GM12878 (cell line): ENCODE measurements at regions of chr3 and their contacts with region 1.

Region 1: DNA sequence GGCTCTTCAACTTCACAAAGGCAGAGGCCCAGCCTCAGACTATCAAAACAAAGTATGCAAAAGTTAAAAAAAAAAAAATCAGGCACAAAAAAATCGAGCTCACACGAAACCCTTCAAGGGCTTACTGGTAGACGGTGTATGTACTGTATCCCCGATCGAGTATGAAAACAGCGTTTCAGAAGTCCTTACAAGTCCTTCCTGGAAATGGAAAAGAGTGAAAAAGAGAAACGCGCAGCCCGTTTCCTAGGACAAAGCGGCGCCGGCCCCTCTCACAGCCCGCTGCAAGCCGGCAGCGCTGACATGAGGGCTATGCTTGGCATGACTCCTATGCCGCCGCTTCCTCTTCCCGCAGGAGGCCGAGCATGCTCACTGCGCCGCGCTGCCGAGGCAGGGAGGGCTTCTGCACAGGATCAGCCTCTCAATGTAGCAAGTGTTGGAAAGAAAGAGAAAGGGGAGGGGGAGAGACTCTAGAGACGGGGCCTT is at the start of gene VGLL4:
- DNase-seq: no peak
- ATAC-seq: peak; percentile 85
- H3K4me3 ChIP-seq: peak within 1 kb of the TSS; percentile 86
- H3K27ac ChIP-seq: peak within 1 kb of the TSS; percentile 98
- H3K4me1 ChIP-seq: peaks cover 6% of the 10 kb centered on the region
- H3K27me3 ChIP-seq: no peaks in the 10 kb centered on the region
- CTCF ChIP-seq: peak in 2 of 3 experiments; percentile 4 to 25; a peak in 2 of 6 replicates
- EP300 ChIP-seq: no peak
- POLR2A ChIP-seq: peak; percentile 75
- RAD21 ChIP-seq: peak; percentile 36; the same call in 1 of the 2 replicates
- polyA plus RNA-seq, gene VGLL4: 0.44 to 1.5 TPM

Region 2: DNA sequence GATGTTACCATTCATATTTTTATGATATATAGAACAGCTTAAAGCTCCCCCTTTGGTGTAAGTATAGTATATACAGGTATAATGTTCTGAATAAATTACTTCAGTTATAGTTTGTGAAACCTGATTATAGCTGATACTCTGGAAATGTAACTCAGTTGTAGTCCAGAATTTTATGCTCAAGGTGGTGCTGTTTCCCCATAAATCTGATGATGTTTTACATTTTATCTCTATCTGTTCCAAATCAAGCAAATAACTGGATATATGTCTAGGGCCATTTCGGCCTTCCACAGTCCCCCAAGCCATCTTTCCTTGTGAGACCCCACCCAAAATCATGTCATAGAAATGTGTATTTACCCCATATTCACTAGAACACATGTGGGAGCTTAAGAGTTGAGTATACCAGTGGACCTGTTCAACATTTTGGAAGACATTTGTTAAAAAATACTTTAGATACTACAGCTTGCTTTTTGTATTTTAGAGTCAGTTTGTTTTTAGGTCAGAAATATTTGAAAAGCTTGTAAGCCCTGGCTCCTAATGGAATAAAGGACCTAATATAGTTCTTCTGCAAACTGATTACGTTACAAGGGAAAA is 264.3 kb before region 1 on chr3:
- CTCF ChIA-PET with region 1: interaction called, 19 read pairs
- POLR2A ChIA-PET with region 1: interaction called, 4 read pairs
- RAD21 ChIA-PET with region 1: interaction called, 53 read pairs
- SMC1A ChIA-PET with region 1: interaction called, 55 read pairs
- in situ Hi-C with region 1: no loop called
- intact Hi-C with region 1: no loop called
- DNase-seq: peak; percentile 13
- ATAC-seq: peak; percentile 49; the same call in 2 of the 3 replicates
- H3K4me3 ChIP-seq: no peak overlapping the region
- H3K27ac ChIP-seq: no peak overlapping the region
- H3K4me1 ChIP-seq: no peaks in the 10 kb centered on the region
- H3K27me3 ChIP-seq: no peaks in the 10 kb centered on the region
- CTCF ChIP-seq: peak; percentile 22 to 60 (median 44); a peak in 4 of 6 replicates
- EP300 ChIP-seq: no peak
- POLR2A ChIP-seq: no peak
- RAD21 ChIP-seq: peak; percentile 69

Region 3: GRCh38 chr3:11582191-11582968 is 61.3 kb before region 1 on chr3:
- CTCF ChIA-PET with region 1: interaction called, 3 read pairs
- POLR2A ChIA-PET with region 1: interaction called, 3 read pairs
- RAD21 ChIA-PET with region 1: interaction called, 12 read pairs
- SMC1A ChIA-PET with region 1: interaction called, 4 read pairs
- in situ Hi-C with region 1: no loop called
- intact Hi-C with region 1: loop called (anchors 5 kb)
- DNase-seq: no peak
- ATAC-seq: peak; percentile 88
- H3K4me3 ChIP-seq: peak overlapping the region; percentile 42
- H3K27ac ChIP-seq: peak overlapping the region; percentile 61
- H3K4me1 ChIP-seq: peaks cover 20% of the 10 kb centered on the region
- H3K27me3 ChIP-seq: no peaks in the 10 kb centered on the region
- CTCF ChIP-seq: no peak
- EP300 ChIP-seq: no peak
- POLR2A ChIP-seq: no peak
- RAD21 ChIP-seq: no peak

Region 4: GRCh38 chr3:11601446-11602238 is 42.0 kb before region 1 on chr3:
- CTCF ChIA-PET with region 1: interaction called, 3 read pairs
- POLR2A ChIA-PET with region 1: interaction called, 9 read pairs
- RAD21 ChIA-PET with region 1: interaction called, 10 read pairs
- SMC1A ChIA-PET with region 1: interaction called, 7 read pairs
- in situ Hi-C with region 1: no loop called
- intact Hi-C with region 1: loop called (anchors 5 kb)
- DNase-seq: peak; percentile 47
- ATAC-seq: peak; percentile 94
- H3K4me3 ChIP-seq: peak overlapping the region; percentile 16; the same call in 1 of the 2 replicates
- H3K27ac ChIP-seq: peak overlapping the region; percentile 56
- H3K4me1 ChIP-seq: peaks cover 14% of the 10 kb centered on the region
- H3K27me3 ChIP-seq: no peaks in the 10 kb centered on the region
- CTCF ChIP-seq: no peak
- EP300 ChIP-seq: peak; percentile 6 to 61; a peak in 2 of 4 replicates
- POLR2A ChIP-seq: peak; percentile 58
- RAD21 ChIP-seq: no peak

Region 5: GRCh38 chr3:11619946-11620657 is 23.5 kb before region 1 on chr3:
- CTCF ChIA-PET with region 1: interaction called, 9 read pairs
- POLR2A ChIA-PET with region 1: interaction called, 19 read pairs
- RAD21 ChIA-PET with region 1: interaction called, 8 read pairs
- SMC1A ChIA-PET with region 1: interaction called, 55 read pairs
- in situ Hi-C with region 1: no loop called
- intact Hi-C with region 1: no loop called
- DNase-seq: no peak
- ATAC-seq: peak; percentile 69
- H3K4me3 ChIP-seq: no peak overlapping the region
- H3K27ac ChIP-seq: no peak overlapping the region
- H3K4me1 ChIP-seq: peaks cover 27% of the 10 kb centered on the region
- H3K27me3 ChIP-seq: no peaks in the 10 kb centered on the region
- CTCF ChIP-seq: no peak
- EP300 ChIP-seq: no peak
- POLR2A ChIP-seq: no peak
- RAD21 ChIP-seq: no peak

Region 6: GRCh38 chr3:11626084-11626463 is 17.6 kb before region 1 on chr3:
- CTCF ChIA-PET with region 1: interaction called, 9 read pairs
- POLR2A ChIA-PET with region 1: interaction called, 19 read pairs
- RAD21 ChIA-PET with region 1: interaction called, 8 read pairs
- SMC1A ChIA-PET with region 1: interaction called, 55 read pairs
- in situ Hi-C with region 1: no loop called
- intact Hi-C with region 1: no loop called
- DNase-seq: peak; percentile 72
- ATAC-seq: peak; percentile 84
- H3K4me3 ChIP-seq: peak overlapping the region; percentile 38; the same call in 1 of the 2 replicates
- H3K27ac ChIP-seq: peak overlapping the region; percentile 68; the same call in 1 of the 2 replicates
- H3K4me1 ChIP-seq: peaks cover 31% of the 10 kb centered on the region
- H3K27me3 ChIP-seq: no peaks in the 10 kb centered on the region
- CTCF ChIP-seq: no peak
- EP300 ChIP-seq: peak; percentile 69 to 84; a peak in 3 of 4 replicates
- POLR2A ChIP-seq: no peak
- RAD21 ChIP-seq: no peak